Colonic mucosa (tissue), 4 donors: ENCODE measurements at regions of chr12 and their contacts with region 1.

Region 1: DNA sequence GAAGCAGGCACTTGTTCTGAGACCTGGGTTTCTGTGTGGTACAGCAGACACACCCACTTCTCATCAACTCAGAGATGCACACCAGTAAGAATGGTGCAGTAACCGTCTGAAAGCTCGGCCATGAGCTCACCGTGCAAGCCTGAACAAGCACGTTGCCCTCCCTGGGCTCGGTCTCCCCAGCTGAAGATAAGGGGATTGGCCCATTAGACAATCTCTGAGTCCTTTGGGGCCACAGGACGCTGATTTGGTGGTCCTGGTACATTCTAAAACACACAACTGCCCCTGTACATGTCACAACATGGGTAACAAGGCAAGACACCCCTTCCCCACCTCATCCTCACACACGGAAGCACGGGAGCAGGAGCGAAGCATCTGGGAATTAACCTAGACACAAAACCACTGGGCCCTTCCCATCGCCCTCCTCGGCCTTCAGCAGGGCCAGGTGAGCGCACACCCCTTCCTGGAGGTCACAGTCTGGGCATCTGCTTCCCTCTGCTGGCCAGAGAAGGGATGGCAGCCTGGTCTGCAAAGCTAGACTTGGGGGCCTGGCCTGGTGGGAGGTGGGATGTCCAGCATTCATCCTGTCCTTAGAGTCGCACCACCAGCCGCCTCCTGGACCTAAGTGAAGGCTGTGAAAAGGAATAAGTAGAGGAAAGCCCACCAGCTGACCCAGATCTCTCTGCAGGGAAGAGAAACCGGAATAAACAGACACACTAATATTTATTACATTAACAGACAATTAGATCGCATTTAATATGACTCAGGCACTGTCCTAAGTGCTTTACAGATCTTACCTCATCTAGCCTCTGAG is 18.9 kb upstream of the SMUG1 start:
- DNase-seq: peak; percentile 75
- H3K4me3 ChIP-seq: no peak overlapping the region
- H3K27ac ChIP-seq: no peak overlapping the region
- H3K4me1 ChIP-seq: no peaks in the 10 kb centered on the region
- H3K27me3 ChIP-seq: peaks cover 39% of the 10 kb centered on the region
- CTCF ChIP-seq: peak; percentile 81

Region 2: DNA sequence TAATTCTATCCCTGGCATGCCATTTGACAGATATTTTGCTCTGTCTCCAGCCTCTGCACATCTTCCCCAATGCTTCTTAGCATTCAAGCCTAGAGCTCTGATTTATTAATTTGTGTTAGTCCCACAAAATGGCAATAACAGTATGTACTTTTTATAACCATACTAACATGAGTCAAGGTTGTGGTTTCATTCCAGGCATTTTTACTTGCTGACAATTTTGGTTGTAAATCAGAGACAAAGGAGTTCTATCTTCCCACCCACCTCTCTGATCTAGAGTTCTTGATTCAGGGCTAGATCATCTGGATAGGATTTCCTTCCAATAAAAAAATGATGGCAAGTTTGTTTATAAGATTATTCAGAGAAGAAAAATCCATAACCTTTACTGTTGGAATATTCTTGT is 437.4 kb before region 1 on chr12:
- intact Hi-C with region 1: loop called (anchors 10 kb)
- DNase-seq: no peak
- H3K4me3 ChIP-seq: no peak overlapping the region
- H3K27ac ChIP-seq: no peak overlapping the region
- H3K4me1 ChIP-seq: no peaks in the 10 kb centered on the region
- H3K27me3 ChIP-seq: peaks cover 12% of the 10 kb centered on the region
- CTCF ChIP-seq: no peak

Region 3: DNA sequence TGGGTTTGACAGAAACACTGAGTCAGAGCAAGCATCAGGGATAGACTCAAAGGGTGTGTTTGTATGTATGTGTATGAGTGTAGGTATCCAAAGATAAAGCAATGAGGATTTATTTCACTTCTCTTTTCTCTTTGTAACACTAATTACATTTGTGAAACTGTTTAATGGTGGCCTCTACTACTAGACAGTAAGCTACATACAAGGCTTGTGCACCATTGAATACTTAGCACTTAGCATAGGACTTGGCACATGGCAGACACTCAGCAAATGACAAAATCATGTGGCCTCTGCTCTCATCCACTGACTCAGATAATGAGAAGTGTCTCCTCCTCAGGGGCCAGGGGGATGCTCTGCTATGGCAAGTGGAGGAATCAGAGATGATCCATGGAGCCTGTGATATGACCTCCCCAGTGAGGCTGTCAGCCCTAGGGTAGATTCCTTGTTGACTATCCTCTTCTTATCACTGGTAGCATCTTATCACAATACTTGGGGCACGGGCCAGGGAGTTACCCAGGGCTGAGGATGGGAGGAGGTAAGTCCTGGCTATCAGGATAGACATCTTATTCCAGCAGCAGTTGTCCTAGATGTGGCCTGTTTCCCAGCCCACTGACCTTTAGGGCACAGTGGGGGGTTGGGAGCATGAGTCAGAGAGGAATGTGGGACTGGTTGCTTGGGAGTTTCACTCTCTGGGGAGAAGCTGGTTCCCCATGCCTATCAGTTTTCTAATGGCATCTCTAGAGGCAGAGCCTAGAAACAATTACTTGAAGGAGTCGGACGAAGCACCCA is 340.3 kb before region 1 on chr12:
- intact Hi-C with region 1: no loop called
- DNase-seq: no peak
- H3K4me3 ChIP-seq: no peak overlapping the region
- H3K27ac ChIP-seq: no peak overlapping the region
- H3K4me1 ChIP-seq: no peaks in the 10 kb centered on the region
- H3K27me3 ChIP-seq: no peaks in the 10 kb centered on the region
- CTCF ChIP-seq: no peak